Activated CD4-positive, alpha-beta memory T cell treated with anti-CD3 and anti-CD28 coated beads for 36 hours (primary cell): ENCODE measurements at regions of chr11 and their contacts with region 1.

Region 1: GRCh38 chr11:117092951-117093590 is 5.2 kb downstream of the SIK3 start:
- DNase-seq: no peak
- H3K4me3 Mint-ChIP-seq: peak overlapping the region; percentile 40
- H3K27ac Mint-ChIP-seq: peak overlapping the region; percentile 73
- H3K4me1 Mint-ChIP-seq: peaks cover 75% of the 10 kb centered on the region
- H3K27me3 Mint-ChIP-seq: no peaks in the 10 kb centered on the region

Region 2: DNA sequence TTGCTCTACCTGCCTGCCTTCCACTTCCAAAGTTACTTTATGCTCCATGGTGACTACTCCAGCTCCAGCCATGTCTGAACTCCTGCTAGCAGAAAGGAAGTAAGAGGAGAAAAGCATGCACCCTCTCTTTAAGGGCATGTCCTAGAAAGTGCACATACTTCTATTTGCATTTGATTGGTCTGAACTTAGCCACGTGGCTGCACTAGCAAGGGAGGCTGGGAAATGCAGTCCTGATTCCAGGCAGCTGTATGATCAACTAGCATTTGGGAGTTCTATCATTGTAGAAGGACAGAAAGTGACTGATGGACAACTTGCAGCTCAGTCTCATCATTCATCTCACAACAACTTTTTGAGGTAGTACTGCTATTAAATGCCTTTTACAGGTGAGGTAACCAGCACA is 836.0 kb before region 1 on chr11:
- CTCF ChIA-PET with region 1: no interaction called
- POLR2A ChIA-PET with region 1: no interaction called
- intact Hi-C with region 1: no loop called
- DNase-seq: no peak
- H3K4me3 Mint-ChIP-seq: no peak overlapping the region
- H3K27ac Mint-ChIP-seq: no peak overlapping the region
- H3K4me1 Mint-ChIP-seq: no peaks in the 10 kb centered on the region
- H3K27me3 Mint-ChIP-seq: peaks cover 10% of the 10 kb centered on the region

Region 3: DNA sequence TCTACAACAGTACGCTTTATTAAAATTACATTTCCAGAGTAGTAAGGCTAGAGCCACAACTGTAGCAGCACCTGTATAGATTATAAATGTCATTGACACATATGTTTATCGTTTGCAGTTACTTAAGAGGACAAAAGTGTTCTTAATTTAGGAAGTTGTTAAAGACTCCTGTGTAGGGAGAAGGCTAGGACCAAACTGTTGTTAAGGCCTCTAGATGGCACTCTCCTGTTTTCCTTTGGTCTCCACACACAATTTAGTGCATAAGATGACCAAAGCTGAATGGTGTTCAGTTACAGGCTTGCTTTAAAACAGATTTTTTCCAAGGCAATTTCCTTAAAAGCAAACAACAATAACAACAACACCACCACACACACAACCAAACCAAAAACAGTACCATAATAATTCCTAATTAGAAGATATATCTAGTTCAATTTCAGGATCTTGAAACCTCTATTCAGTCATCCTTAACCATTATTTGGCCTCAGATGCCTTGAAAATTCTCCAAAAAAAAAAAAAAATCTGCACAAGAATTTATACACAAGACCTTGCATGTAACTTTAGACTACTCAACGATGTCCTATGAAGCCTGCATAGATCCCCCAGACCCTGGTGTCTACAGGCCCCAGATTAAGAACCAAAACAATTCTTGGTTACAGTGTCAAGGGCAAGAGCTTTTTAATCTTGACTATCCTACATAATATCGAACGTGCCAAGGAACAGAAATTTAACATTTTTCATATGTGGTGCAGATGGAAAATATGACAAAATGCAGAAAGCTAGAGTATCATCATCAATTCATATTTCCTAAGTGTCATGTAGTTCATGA is 213.1 kb before region 1 on chr11:
- CTCF ChIA-PET with region 1: interaction called, 14 read pairs
- POLR2A ChIA-PET with region 1: interaction called, 5 read pairs
- intact Hi-C with region 1: loop called (anchors 1 kb)
- DNase-seq: no peak
- H3K4me3 Mint-ChIP-seq: no peak overlapping the region
- H3K27ac Mint-ChIP-seq: no peak overlapping the region
- H3K4me1 Mint-ChIP-seq: peaks cover 28% of the 10 kb centered on the region
- H3K27me3 Mint-ChIP-seq: no peaks in the 10 kb centered on the region

Region 4: GRCh38 chr11:117020287-117020686 is 72.8 kb before region 1 on chr11:
- CTCF ChIA-PET with region 1: interaction called, 5 read pairs
- POLR2A ChIA-PET with region 1: interaction called, 8 read pairs
- intact Hi-C with region 1: loop called (anchors 1 kb)
- DNase-seq: peak; percentile 65
- H3K4me3 Mint-ChIP-seq: no peak overlapping the region
- H3K27ac Mint-ChIP-seq: peak overlapping the region; percentile 11
- H3K4me1 Mint-ChIP-seq: peaks cover 67% of the 10 kb centered on the region
- H3K27me3 Mint-ChIP-seq: no peaks in the 10 kb centered on the region

Region 5: DNA sequence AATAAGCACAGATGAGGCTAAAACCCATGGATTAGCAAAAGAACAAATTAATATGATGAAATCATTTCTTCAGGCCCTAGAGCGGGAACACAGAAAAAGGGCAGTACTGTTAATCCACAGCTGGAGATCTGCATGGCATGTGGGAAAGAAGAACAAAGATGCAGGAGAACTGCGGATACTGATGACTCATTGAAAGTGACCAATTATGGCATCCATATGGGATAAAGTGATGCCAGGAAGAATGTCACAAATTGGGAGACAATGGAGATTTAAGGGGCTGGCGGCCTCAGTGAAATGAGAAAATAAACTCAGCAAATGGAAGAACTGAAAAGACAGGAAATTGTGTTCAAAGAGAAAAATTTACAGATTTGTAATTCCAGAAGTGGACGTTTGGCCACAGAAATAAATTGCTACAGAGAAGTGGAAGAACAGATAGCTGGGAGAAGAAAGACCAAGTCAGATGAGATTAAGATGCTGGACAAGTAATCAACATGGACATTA is 34.3 kb before region 1 on chr11:
- CTCF ChIA-PET with region 1: interaction called, 3 read pairs
- POLR2A ChIA-PET with region 1: interaction called, 19 read pairs
- intact Hi-C with region 1: loop called (anchors 1 kb)
- DNase-seq: no peak
- H3K4me3 Mint-ChIP-seq: no peak overlapping the region
- H3K27ac Mint-ChIP-seq: no peak overlapping the region
- H3K4me1 Mint-ChIP-seq: peaks cover 59% of the 10 kb centered on the region
- H3K27me3 Mint-ChIP-seq: no peaks in the 10 kb centered on the region

Region 6: GRCh38 chr11:117072517-117073461 is 20.3 kb before region 1 on chr11:
- CTCF ChIA-PET with region 1: interaction called, 6 read pairs
- POLR2A ChIA-PET with region 1: interaction called, 14 read pairs
- intact Hi-C with region 1: loop called (anchors 1 kb)
- DNase-seq: no peak
- H3K4me3 Mint-ChIP-seq: peak overlapping the region; percentile 2
- H3K27ac Mint-ChIP-seq: no peak overlapping the region
- H3K4me1 Mint-ChIP-seq: peaks cover 70% of the 10 kb centered on the region
- H3K27me3 Mint-ChIP-seq: no peaks in the 10 kb centered on the region

Region 7: DNA sequence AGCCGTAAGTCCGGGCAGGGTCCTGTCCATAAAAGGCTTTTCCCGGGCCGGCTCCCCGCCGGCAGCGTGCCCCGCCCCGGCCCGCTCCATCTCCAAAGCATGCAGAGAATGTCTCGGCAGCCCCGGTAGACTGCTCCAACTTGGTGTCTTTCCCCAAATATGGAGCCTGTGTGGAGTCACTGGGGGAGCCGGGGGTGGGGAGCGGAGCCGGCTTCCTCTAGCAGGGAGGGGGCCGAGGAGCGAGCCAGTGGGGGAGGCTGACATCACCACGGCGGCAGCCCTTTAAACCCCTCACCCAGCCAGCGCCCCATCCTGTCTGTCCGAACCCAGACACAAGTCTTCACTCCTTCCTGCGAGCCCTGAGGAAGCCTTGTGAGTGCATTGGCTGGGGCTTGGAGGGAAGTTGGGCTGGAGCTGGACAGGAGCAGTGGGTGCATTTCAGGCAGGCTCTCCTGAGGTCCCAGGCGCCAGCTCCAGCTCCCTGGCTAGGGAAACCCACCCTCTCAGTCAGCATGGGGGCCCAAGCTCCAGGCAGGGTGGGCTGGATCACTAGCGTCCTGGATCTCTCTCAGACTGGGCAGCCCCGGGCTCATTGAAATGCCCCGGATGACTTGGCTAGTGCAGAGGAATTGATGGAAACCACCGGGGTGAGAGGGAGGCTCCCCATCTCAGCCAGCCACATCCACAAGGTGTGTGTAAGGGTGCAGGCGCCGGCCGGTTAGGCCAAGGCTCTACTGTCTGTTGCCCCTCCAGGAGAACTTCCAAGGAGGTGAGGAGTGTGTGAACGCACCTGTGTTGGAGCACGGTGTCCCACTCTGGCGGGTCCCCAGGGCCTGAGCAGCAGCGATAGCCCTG is 106.2 kb after region 1 on chr11 and contains the start of gene TAGLN:
- CTCF ChIA-PET with region 1: no interaction called
- POLR2A ChIA-PET with region 1: no interaction called
- intact Hi-C with region 1: no loop called
- DNase-seq: no peak
- H3K4me3 Mint-ChIP-seq: no peak within 1 kb of the TSS
- H3K27ac Mint-ChIP-seq: no peak within 1 kb of the TSS
- H3K4me1 Mint-ChIP-seq: no peaks in the 10 kb centered on the region
- H3K27me3 Mint-ChIP-seq: no peaks in the 10 kb centered on the region
- total RNA-seq, gene TAGLN: 3.1 to 4.0 TPM